ENCODE measurements at regions of chr19 and their contacts with region 1.

Region 1: DNA sequence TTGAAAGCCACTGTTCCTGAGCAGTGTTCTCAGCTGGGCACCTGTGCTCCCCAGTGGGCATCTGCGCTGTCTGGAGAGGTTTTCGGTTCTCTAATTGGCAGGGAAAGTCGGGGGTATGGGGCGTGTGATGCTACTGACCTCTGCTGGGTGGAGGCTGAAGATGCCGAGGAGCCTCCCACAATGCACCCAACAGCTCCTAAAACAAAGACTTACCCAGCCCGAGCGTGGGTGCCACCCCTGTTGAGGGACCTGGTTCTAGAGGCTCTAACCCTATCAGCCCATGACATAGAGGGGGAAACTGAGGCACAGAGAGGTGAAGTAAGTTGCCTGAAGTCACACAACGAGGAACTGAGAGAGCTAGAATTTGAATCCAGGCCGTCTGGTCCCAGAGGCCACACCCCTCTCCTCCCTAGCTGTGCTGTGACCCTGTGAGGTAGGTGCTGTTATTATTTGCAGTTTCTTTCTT is 2.3 kb downstream of the SPACA4 start:
- DNase-seq: peak; percentile 73
- H3K4me3 Mint-ChIP-seq: no peak overlapping the region
- H3K27ac Mint-ChIP-seq: peak overlapping the region; percentile 19
- H3K4me1 Mint-ChIP-seq: peaks cover 4% of the 10 kb centered on the region
- H3K27me3 Mint-ChIP-seq: no peaks in the 10 kb centered on the region

Region 2: GRCh38 chr19:48492925-48493717 is 115.7 kb before region 1 on chr19:
- CTCF ChIA-PET with region 1: interaction called, 24 read pairs
- POLR2A ChIA-PET with region 1: interaction called, 3 read pairs
- DNase-seq: peak; percentile 88
- H3K4me3 Mint-ChIP-seq: peak overlapping the region; percentile 51
- H3K27ac Mint-ChIP-seq: peak overlapping the region; percentile 35
- H3K4me1 Mint-ChIP-seq: peaks cover 46% of the 10 kb centered on the region
- H3K27me3 Mint-ChIP-seq: peaks cover 56% of the 10 kb centered on the region

Region 3: GRCh38 chr19:48513289-48514122 is 95.3 kb before region 1 on chr19:
- CTCF ChIA-PET with region 1: interaction called, 41 read pairs
- POLR2A ChIA-PET with region 1: no interaction called
- DNase-seq: peak; percentile 78
- H3K4me3 Mint-ChIP-seq: no peak overlapping the region
- H3K27ac Mint-ChIP-seq: peak overlapping the region; percentile 53
- H3K4me1 Mint-ChIP-seq: peaks cover 19% of the 10 kb centered on the region
- H3K27me3 Mint-ChIP-seq: no peaks in the 10 kb centered on the region

Region 4: DNA sequence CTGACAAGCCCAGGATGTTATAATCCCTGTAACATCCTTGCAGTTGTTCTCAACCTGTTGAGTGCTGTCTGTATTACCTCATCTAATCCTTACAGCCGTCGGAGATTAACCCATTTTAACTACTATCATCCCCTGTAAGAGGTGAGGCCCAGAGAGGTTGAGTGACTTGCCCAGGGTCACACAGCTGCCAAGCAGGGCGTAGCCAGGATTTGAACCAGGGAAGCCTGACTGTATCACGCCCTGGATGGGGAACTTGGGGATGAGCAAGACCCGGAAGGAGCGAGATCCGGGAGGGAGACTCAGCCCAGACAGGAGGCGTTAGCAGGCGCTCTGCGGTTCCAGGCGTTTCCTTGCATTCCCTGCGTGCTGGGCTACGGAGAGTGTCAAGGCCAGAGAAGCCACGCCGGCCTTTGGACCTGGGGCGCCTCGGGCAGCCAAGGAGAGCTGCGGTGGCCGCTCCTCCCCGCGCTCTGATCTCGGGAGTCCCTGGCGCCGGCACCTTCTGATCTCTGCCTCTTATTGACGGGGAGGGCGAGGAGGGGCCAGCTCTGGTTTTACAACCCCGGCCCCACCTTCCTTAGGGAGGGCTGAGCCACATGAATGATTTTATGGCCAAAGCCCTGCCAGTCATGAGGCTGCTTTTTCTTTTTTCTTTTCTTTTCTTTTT is 50.7 kb before region 1 on chr19:
- CTCF ChIA-PET with region 1: no interaction called
- POLR2A ChIA-PET with region 1: no interaction called
- DNase-seq: no peak
- H3K4me3 Mint-ChIP-seq: no peak overlapping the region
- H3K27ac Mint-ChIP-seq: no peak overlapping the region
- H3K4me1 Mint-ChIP-seq: peaks cover 1% of the 10 kb centered on the region
- H3K27me3 Mint-ChIP-seq: peaks cover 4% of the 10 kb centered on the region

Region 5: DNA sequence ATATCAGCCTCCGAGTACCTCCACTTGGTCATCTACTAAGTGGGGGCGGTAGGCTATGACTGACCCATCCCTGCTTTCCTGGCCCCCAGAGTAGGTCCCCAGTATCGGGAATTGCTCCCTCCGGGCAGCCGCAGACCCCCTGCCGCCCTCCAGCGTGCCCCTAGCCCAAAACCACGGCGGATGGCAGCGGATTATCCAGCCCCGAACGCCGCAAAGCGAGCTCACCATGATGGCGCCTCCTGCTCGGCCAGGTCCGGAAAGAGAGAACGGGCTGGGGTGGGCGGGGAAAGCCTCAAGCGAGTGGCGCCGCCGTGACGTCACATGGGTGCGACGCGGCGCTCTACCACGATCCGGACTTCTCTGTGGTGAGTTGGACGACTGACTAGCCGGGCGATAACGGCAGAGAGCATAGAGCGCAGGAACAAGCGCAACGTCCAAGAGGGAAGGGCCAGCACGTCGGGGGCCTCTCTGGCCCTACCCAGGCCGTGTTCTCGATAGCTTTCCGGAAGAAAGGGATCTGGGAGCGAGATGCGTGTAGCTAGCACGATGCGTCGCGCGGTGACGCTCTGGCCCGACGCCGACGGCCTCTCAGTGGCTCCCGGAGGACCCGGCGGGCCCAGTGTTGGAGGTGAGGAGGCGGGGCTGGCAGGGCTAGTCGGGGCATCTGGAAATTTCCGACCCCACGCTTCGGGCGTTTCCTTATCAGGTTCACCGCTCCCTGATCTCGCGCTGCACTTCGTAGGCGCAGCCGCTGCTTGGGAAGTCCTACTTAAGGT is 10.3 kb after region 1 on chr19 and contains the starts of genes RPL18 and SPHK2:
- CTCF ChIA-PET with region 1: interaction called, 10 read pairs
- POLR2A ChIA-PET with region 1: interaction called, 51 read pairs
- DNase-seq: peak; percentile 97
- H3K4me3 Mint-ChIP-seq: peak within 1 kb of the TSS; percentile 96
- H3K27ac Mint-ChIP-seq: peak within 1 kb of the TSS; percentile 97
- H3K4me1 Mint-ChIP-seq: peaks cover 58% of the 10 kb centered on the region
- H3K27me3 Mint-ChIP-seq: no peaks in the 10 kb centered on the region
- total RNA-seq, gene RPL18: 1,511 to 1,528 TPM
- total RNA-seq, gene SPHK2: 27.7 to 29.5 TPM

Region 6: GRCh38 chr19:48685583-48685982 is 76.8 kb after region 1 on chr19:
- CTCF ChIA-PET with region 1: no interaction called
- POLR2A ChIA-PET with region 1: no interaction called
- DNase-seq: no peak
- H3K4me3 Mint-ChIP-seq: no peak overlapping the region
- H3K27ac Mint-ChIP-seq: no peak overlapping the region
- H3K4me1 Mint-ChIP-seq: no peaks in the 10 kb centered on the region
- H3K27me3 Mint-ChIP-seq: no peaks in the 10 kb centered on the region

Region 7: GRCh38 chr19:48819366-48819816 is 210.6 kb after region 1 on chr19:
- CTCF ChIA-PET with region 1: no interaction called
- POLR2A ChIA-PET with region 1: no interaction called
- DNase-seq: no peak
- H3K4me3 Mint-ChIP-seq: no peak overlapping the region
- H3K27ac Mint-ChIP-seq: no peak overlapping the region
- H3K4me1 Mint-ChIP-seq: peaks cover 8% of the 10 kb centered on the region
- H3K27me3 Mint-ChIP-seq: peaks cover 2% of the 10 kb centered on the region

Measured in activated CD4-positive, alpha-beta memory T cell treated with anti-CD3 and anti-CD28 coated beads, Interleukin-2, amount 10 ng/mL, durations not matched to agents 7 days and 5 days (primary cell).